ENCODE measurements at regions of chr11 and their contacts with region 1.

Region 1: DNA sequence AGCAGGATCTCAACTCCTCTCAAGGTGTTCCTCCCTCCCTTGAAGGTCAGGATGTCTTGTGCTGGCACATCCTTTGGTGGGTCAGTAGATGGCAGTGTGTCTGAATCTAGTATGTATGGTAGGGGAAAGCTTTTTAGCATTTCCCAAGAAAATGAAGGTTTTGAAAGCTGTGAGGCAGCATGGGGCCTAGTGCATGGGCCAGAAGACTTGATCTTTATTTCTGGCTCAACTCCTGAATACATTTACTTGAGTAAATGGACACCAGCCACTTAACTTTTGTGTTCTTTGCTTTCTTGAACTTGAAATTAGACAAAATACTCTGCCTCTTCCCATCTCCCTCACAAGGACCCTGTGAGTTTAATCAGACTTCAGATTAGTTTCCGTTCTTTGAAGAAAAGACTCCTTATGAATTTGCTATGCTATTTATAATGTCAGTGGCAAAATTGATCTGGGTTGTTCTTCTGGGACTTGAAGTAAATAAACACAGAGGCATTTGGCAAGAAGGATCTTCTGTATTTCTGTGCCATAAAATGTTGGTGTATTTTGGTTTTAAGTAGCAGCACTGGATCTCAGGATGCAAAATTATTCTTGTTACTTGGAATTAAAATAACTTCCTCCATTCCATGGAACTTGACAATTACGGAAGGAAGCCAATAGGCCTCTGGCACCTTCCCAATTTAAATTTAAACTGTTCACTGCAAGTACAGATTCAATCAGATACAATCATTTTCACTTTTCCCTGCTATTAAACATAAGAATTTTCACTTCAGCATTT is 288.8 kb downstream of the CASP12 start:
- DNase-seq: peak; percentile 33
- H3K4me3 Mint-ChIP-seq: no peak overlapping the region
- H3K27ac Mint-ChIP-seq: no peak overlapping the region
- H3K4me1 Mint-ChIP-seq: peaks cover 23% of the 10 kb centered on the region
- H3K27me3 Mint-ChIP-seq: no peaks in the 10 kb centered on the region

Region 2: GRCh38 chr11:103338621-103339484 is 1270.6 kb before region 1 on chr11:
- CTCF ChIA-PET with region 1: no interaction called
- POLR2A ChIA-PET with region 1: no interaction called
- intact Hi-C with region 1: no loop called
- DNase-seq: no peak
- H3K4me3 Mint-ChIP-seq: no peak overlapping the region
- H3K27ac Mint-ChIP-seq: no peak overlapping the region
- H3K4me1 Mint-ChIP-seq: no peaks in the 10 kb centered on the region
- H3K27me3 Mint-ChIP-seq: no peaks in the 10 kb centered on the region

Region 3: GRCh38 chr11:104657083-104657482 is 47.6 kb after region 1 on chr11:
- CTCF ChIA-PET with region 1: no interaction called
- POLR2A ChIA-PET with region 1: no interaction called
- intact Hi-C with region 1: loop called (anchors 5 kb)
- DNase-seq: no peak
- H3K4me3 Mint-ChIP-seq: no peak overlapping the region
- H3K27ac Mint-ChIP-seq: no peak overlapping the region
- H3K4me1 Mint-ChIP-seq: peaks cover 28% of the 10 kb centered on the region
- H3K27me3 Mint-ChIP-seq: no peaks in the 10 kb centered on the region

Region 4: DNA sequence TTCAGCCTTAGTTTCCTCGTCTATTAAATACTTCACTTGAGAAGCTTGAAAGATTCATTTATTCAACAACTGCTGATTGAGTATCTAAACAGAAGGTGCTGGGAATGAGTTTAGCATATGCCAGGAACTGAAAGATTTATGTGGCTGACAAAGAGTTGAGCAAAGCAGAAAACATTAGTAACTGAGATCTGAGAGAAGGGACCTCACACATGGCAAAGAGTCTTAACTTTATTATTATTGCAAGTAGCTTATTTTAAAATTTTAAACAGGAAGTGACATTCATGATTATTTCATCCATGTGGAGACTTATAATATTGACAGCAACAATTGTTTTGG is 155.2 kb after region 1 on chr11:
- CTCF ChIA-PET with region 1: no interaction called
- POLR2A ChIA-PET with region 1: no interaction called
- intact Hi-C with region 1: loop called (anchors 10 kb)
- DNase-seq: no peak
- H3K4me3 Mint-ChIP-seq: no peak overlapping the region
- H3K27ac Mint-ChIP-seq: no peak overlapping the region
- H3K4me1 Mint-ChIP-seq: peaks cover 16% of the 10 kb centered on the region
- H3K27me3 Mint-ChIP-seq: no peaks in the 10 kb centered on the region

Region 5: DNA sequence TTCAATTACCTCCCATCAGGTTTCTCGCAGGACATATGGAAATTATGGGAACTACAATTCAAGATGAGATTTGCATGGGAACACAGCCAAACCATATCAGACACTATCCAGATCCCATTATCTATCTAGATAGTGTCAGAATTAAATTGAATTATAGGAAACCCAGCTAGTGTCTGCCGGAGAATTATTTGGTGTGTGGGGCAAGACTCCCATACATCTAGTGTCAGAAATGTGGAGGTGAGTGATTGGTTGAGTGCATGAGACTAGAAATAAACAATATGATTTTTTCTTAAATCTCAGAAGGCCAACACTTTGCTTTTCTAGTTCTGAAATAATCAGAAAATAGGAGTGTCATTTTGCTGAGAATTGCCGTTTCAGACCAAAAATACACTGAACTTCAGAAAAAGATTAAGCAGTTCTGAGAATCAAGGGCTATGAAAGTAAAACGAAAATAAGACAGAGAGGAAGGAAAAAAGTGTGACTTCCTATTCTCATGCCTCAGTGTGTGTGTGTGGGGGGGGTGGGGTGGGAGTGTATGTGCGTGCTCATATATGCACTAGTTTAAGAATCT is 267.4 kb after region 1 on chr11:
- CTCF ChIA-PET with region 1: interaction called, 5 read pairs
- POLR2A ChIA-PET with region 1: no interaction called
- intact Hi-C with region 1: loop called (anchors 10 kb)
- DNase-seq: no peak
- H3K4me3 Mint-ChIP-seq: peak overlapping the region; percentile 3
- H3K27ac Mint-ChIP-seq: peak overlapping the region; percentile 23
- H3K4me1 Mint-ChIP-seq: peaks cover 31% of the 10 kb centered on the region
- H3K27me3 Mint-ChIP-seq: no peaks in the 10 kb centered on the region

Region 6: DNA sequence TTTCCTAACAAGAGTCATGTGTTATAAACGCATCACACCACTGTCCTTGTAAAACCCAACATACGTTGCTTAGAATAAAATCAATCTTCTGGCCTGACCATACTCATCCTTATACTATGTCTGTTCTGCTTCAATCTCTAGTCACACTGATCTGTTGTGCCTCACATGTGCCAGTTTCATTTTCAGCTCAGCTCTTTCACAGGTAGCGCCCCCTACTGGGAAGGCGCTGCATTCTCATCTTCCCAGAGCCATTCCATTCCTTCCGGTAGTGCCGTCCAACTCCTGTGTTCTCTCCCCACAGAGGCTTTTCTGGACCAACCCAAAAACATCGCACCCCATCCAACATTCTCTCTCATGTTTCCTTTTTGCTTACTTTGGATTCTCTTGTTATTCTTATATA is 391.3 kb after region 1 on chr11:
- CTCF ChIA-PET with region 1: interaction called, 3 read pairs
- POLR2A ChIA-PET with region 1: no interaction called
- intact Hi-C with region 1: loop called (anchors 1 kb)
- DNase-seq: peak; percentile 74
- H3K4me3 Mint-ChIP-seq: no peak overlapping the region
- H3K27ac Mint-ChIP-seq: no peak overlapping the region
- H3K4me1 Mint-ChIP-seq: peaks cover 5% of the 10 kb centered on the region
- H3K27me3 Mint-ChIP-seq: no peaks in the 10 kb centered on the region

Region 7: GRCh38 chr11:105862736-105863367 is 1253.4 kb after region 1 on chr11:
- CTCF ChIA-PET with region 1: no interaction called
- POLR2A ChIA-PET with region 1: no interaction called
- intact Hi-C with region 1: loop called (anchors 1 kb)
- DNase-seq: no peak
- H3K4me3 Mint-ChIP-seq: no peak overlapping the region
- H3K27ac Mint-ChIP-seq: no peak overlapping the region
- H3K4me1 Mint-ChIP-seq: no peaks in the 10 kb centered on the region
- H3K27me3 Mint-ChIP-seq: peaks cover 5% of the 10 kb centered on the region

Measured in activated CD4-positive, alpha-beta memory T cell treated with anti-CD3 and anti-CD28 coated beads for 36 hours (primary cell).